PC-9 (cell line): ENCODE measurements at regions of chr20 and their contacts with region 1.

Region 1: DNA sequence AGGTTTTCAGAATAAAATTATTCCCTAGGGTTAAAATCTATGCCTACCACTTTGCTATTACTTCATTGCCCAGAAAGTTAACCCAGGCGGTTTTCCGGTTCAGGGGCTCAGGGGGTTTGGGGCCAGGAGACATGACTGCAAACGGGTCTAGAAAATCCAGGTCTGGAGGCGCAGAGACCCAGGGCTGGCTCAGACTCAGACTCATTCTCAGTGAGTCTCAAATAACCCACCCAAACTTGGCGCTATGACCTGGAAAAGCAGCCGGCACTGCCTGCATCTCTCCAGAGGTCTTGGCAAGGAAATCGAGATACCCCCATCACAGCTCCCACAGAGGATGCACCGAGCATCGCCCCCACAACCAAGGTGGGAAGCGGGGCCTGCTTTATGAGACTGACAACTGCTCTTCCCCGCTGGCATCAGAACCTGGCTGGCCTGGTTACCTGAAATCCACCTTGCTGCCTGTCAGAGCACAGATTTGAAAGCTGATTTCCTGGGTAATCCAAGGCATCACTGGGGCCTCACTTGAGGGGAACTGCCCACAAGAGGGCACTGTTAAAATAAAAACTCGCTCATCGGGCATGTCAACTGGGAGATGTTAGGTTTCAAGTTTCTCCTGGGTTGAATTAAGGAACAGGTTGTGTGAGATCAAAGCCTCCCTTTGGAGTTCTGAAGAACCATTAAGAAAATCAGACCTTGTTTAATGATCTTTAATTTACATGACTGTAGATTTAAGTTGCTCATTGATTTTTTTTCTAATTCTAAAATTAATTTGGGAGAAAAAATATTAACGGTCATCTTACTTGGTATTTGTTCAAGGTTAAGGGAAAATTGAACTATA is 55.1 kb downstream of the KIF16B start:
- DNase-seq: peak; percentile 53 to 61
- H3K4me3 ChIP-seq: no peak overlapping the region
- H3K27ac ChIP-seq: no peak overlapping the region
- H3K4me1 ChIP-seq: no peaks in the 10 kb centered on the region
- H3K27me3 ChIP-seq: no peaks in the 10 kb centered on the region
- CTCF ChIP-seq: peak; percentile 82

Region 2: DNA sequence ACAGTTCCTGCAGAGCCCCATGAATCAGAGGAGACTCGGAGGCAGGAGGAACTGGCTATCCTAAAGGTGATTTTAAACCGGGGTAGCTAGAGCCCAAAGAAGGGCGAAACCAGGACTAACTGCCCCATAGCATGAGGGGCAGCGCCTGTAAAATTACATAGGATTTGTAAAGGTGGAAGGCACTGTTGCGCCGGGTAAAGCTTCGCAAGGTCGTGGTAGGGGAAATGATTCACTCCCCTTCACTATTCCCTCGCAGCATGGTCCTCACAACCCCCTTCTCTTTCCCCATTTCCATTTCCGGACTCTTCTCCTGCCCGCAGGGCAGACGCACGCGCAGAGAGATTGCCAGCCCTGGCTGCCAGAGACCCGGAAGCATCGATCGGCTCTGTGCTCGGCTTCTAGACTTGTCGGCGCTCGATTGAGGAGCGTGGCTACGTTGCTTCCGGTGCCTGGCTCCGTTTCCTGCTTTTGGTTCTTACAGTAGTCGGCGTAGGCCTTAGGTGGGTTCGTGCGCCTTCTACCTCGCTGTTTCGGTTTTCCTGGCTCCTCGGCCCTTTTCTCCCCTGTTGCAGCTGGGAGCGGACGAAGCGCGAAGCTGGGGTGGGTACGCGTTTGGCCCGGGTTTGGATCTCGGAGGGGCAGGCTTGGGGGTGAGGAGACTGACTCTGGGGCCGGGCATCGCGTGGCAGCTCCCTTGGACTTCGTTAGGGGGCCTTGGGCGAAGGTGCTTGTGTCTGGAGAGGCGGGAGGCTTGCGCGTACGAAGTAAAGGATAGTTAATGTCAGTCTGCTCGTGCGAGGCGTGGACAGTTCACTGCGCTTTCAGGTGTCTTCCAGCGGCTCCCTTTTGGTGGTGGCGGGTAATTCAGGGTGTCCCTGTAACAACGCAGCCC is 211.6 kb after region 1 on chr20 and contains the start of gene SNRPB2:
- CTCF ChIA-PET with region 1: no interaction called
- POLR2A ChIA-PET with region 1: no interaction called
- intact Hi-C with region 1: loop called (anchors 5 kb)
- DNase-seq: peak; percentile 86 to 87
- H3K4me3 ChIP-seq: peak within 1 kb of the TSS; percentile 85
- H3K27ac ChIP-seq: peak within 1 kb of the TSS; percentile 38
- H3K4me1 ChIP-seq: peaks cover 24% of the 10 kb centered on the region
- H3K27me3 ChIP-seq: peaks cover 7% of the 10 kb centered on the region; the same call in 1 of the 2 replicates
- CTCF ChIP-seq: no peak
- total RNA-seq, gene SNRPB2: 44.8 and 57.9 TPM in 2 replicates